ENCODE measurements at regions of chr19 and their contacts with region 1.

Region 1: GRCh38 chr19:12294249-12295158 is at the start of gene ZNF44:
- DNase-seq: peak; percentile 98
- ATAC-seq: peak; percentile 98
- H3K4me3 ChIP-seq: peak within 1 kb of the TSS; percentile 67 to 79
- H3K27ac ChIP-seq: peak within 1 kb of the TSS in 1 of 2 donors; percentile 81
- H3K4me1 ChIP-seq: no peaks in the 10 kb centered on the region
- H3K27me3 ChIP-seq: no peaks in the 10 kb centered on the region
- total RNA-seq, gene ZNF44: 13.9 to 19.9 TPM

Region 2: DNA sequence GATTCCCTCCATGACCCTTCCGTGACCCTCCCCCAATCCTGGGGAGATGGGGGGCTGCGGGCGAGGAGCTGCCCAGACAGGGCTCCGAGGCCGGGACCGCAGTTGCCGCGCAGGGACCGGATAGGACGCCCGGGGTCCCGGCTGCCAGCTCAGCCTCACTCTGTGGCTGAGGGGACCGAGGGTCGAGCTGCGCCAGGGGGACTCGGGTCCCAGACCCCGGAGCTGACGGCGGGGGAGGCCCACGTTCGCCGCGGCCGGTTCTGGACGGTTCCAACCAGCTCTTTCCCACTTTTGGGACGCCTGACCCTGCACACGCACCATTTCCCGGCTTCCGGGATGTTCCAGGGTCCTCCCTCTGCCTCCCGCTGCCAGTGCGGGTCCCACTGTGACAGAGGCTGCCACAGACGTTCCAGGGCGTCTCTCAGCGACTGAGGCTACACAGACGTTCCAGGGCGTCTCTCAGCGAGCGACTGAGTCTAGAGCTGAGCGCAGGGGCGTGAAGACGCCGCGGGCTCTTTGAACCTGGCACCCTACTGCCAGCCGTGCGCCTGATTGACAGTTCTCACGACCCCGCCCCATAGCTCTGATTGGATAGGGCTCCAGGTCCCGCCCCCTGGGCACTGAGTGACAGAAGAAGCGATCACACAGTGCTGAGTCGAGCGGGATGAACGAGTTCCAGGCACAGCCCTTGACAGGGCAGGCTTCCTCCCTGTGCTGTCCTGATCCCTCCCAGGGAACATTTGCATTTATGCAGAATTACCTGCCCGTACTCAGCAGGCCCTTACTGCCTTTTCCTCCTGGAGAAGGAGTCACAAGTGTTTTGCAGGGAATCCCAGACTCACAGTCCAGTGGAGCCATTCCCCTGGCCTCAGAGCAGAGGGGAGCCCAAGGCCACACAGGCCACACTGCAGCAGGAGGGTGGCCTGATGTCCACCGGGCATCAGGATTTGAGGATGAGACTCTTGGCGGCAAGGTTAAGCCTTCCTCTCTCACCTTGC is 39.0 kb after region 1 on chr19 and contains the start of gene ZNF563:
- intact Hi-C with region 1: loop called (anchors 2 to 5 kb)
- DNase-seq: peak; percentile 98
- ATAC-seq: peak; percentile 100
- H3K4me3 ChIP-seq: peak within 1 kb of the TSS; percentile 59 to 81
- H3K27ac ChIP-seq: peak within 1 kb of the TSS; percentile 25 to 93
- H3K4me1 ChIP-seq: no peaks in the 10 kb centered on the region
- H3K27me3 ChIP-seq: no peaks in the 10 kb centered on the region
- total RNA-seq, gene ZNF563: 2.5 to 5.4 TPM

Region 3: DNA sequence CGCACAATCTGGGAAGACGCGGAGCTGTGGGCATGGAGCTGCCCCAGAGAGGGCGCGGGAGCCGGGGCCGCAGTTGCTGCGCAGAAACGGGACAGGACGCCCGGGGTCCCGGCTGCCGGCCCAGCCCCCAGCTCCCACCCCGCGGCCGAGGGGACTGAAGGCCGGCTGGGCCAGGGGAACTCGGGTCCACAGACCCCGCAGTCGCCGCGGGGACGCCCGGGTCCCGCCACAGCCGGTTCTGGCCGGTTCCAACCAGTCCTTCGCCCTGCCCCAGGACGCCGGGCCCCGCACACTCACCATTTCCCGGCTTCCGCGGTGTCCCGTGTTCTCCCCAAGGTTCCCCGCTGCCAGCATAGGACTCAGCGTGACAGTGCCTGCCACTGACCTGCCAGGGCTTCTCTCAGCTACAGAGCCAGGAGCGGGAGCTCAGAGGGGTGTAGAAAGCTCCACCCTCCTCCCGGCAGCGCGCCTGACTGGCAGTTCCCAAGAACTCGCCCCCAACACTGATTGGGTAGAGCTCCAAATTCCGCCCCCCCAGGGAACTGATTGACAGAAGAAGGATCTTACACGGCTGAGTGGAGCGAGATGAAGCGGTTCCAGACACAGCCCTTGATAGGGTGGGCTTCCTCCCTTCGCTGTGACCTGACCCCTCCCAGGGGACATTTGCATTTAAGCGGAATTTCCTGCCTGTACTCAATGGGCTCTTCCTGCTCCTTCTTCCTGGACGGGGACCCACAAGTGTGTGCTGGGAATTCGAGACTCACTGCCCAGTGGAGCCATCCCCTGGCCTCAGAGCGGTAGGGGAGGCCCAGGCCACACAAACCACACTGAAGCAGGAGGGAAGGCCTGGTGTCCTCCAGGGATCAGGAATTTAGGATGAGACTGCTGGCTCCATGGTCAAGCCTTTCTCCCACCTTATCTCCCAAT is 71.0 kb after region 1 on chr19 and contains the start of gene ZNF442:
- intact Hi-C with region 1: loop called in 1 of 2 experiments (anchors 2 kb)
- DNase-seq: peak; percentile 97 to 98
- ATAC-seq: peak; percentile 98
- H3K4me3 ChIP-seq: peak within 1 kb of the TSS; percentile 78 to 79
- H3K27ac ChIP-seq: peak within 1 kb of the TSS; percentile 84 to 91
- H3K4me1 ChIP-seq: no peaks in the 10 kb centered on the region
- H3K27me3 ChIP-seq: no peaks in the 10 kb centered on the region
- total RNA-seq, gene ZNF442: 3.6 to 4.5 TPM

Measured in aorta (tissue), 5 donors.